Activated naive CD4-positive, alpha-beta T cell treated with anti-CD3 and anti-CD28 coated beads for 36 hours (primary cell): ENCODE measurements at regions of chr14 and their contacts with region 1.

Region 1: GRCh38 chr14:58072288-58073071 is 79.5 kb downstream of the ARMH4 start:
- DNase-seq: peak; percentile 71
- H3K4me3 Mint-ChIP-seq: no peak overlapping the region
- H3K27ac Mint-ChIP-seq: no peak overlapping the region
- H3K4me1 Mint-ChIP-seq: no peaks in the 10 kb centered on the region
- H3K27me3 Mint-ChIP-seq: peaks cover 3% of the 10 kb centered on the region

Region 2: GRCh38 chr14:57486767-57487379 is 585.6 kb before region 1 on chr14:
- CTCF ChIA-PET with region 1: interaction called, 9 read pairs
- intact Hi-C with region 1: loop called (anchors 1 kb)
- DNase-seq: peak; percentile 5
- H3K4me3 Mint-ChIP-seq: no peak overlapping the region
- H3K27ac Mint-ChIP-seq: no peak overlapping the region
- H3K4me1 Mint-ChIP-seq: no peaks in the 10 kb centered on the region
- H3K27me3 Mint-ChIP-seq: peaks cover 4% of the 10 kb centered on the region

Region 3: DNA sequence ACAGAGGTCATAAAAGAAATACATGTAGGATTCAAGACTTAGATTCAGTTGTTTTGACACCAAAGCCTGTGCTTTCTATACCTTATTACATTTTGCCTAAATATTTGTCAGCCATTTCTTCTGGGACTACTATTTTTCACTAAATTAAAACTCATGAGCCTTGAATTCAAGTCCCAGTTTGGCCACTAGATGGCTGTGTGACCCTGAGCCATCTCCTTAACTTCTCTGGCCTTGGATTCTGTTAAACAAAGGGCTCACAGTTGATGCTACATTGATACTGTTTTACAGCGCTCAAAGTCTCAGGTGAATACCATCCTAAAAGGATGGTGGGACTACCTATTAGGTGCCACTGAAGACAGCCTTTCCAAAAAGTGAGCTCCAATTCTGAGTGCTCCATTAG is 539.3 kb before region 1 on chr14:
- CTCF ChIA-PET with region 1: interaction called, 4 read pairs
- intact Hi-C with region 1: loop called (anchors 1 kb)
- DNase-seq: peak; percentile 45
- H3K4me3 Mint-ChIP-seq: no peak overlapping the region
- H3K27ac Mint-ChIP-seq: no peak overlapping the region
- H3K4me1 Mint-ChIP-seq: no peaks in the 10 kb centered on the region
- H3K27me3 Mint-ChIP-seq: peaks cover 4% of the 10 kb centered on the region

Region 4: GRCh38 chr14:57692671-57693070 is 379.8 kb before region 1 on chr14:
- CTCF ChIA-PET with region 1: interaction called, 6 read pairs
- intact Hi-C with region 1: loop called (anchors 2 kb)
- DNase-seq: no peak
- H3K4me3 Mint-ChIP-seq: no peak overlapping the region
- H3K27ac Mint-ChIP-seq: no peak overlapping the region
- H3K4me1 Mint-ChIP-seq: no peaks in the 10 kb centered on the region
- H3K27me3 Mint-ChIP-seq: no peaks in the 10 kb centered on the region

Region 5: GRCh38 chr14:58376791-58377190 is 304.3 kb after region 1 on chr14:
- CTCF ChIA-PET with region 1: no interaction called
- intact Hi-C with region 1: no loop called
- DNase-seq: no peak
- H3K4me3 Mint-ChIP-seq: no peak overlapping the region
- H3K27ac Mint-ChIP-seq: no peak overlapping the region
- H3K4me1 Mint-ChIP-seq: no peaks in the 10 kb centered on the region
- H3K27me3 Mint-ChIP-seq: no peaks in the 10 kb centered on the region

Region 6: DNA sequence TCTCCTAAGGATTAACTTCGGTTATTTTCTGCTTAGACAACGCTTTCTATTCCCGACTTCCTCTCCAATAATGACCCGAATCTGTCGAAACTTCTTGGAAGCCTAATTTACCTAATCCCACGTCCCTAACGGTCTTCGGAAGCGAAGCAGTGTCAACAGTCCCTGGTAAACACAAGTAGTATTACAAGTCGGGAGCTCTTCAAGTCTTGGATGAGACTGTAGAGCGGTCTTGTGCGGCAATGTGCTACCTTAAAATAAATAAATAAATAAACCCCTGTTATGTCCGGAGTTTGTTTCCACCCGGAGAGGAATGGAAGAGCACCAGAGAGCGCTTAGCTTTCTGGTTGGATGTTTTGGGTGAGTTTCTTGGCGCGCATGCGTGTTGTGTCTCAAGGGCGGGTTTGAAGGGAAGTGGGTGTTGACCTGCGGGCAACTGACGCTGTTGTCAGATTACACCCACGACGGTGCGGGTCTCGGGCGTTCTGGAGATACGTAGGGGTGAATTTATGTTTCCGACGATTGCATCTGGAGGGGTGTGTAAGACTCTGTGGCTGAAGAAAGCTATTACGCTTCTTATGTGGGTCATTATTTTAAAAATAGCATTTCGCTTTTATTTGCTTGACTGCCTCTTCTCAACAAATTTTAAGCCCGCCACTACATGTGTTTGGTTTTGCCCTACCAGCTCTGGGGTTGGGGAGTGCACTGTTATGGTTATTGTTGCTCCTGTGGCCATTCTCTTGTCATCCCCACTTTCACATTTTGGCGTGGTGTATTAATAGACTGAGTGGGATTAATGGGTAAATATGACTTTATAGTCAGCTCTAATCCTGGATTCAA is 355.0 kb after region 1 on chr14 and contains the starts of genes KIAA0586 and TIMM9:
- CTCF ChIA-PET with region 1: no interaction called
- intact Hi-C with region 1: no loop called
- DNase-seq: peak; percentile 98
- H3K4me3 Mint-ChIP-seq: peak within 1 kb of the TSS; percentile 88
- H3K27ac Mint-ChIP-seq: peak within 1 kb of the TSS; percentile 99
- H3K4me1 Mint-ChIP-seq: peaks cover 48% of the 10 kb centered on the region
- H3K27me3 Mint-ChIP-seq: no peaks in the 10 kb centered on the region
- total RNA-seq, gene KIAA0586: 40.4 to 41.8 TPM
- total RNA-seq, gene TIMM9: 60.7 to 64.4 TPM

Region 7: DNA sequence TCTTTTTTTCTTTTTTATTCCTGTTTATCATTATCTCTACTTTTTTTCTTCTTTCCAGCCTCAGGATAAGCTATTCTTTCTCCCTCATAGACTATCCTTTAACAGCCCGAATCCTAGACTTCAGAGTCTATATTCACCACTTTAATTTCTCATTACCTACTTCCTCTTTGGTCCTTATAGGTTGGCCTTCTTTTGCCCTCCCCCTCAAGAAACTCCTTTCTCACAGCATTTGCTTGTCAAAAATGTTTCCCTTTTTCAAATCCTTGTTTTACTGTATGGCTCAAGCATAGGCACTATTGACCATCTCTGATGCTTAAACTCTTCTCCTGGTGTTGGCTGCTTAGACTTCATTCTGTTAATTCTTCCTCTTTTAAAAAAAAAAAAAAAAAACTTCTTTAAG is 407.5 kb after region 1 on chr14:
- CTCF ChIA-PET with region 1: no interaction called
- intact Hi-C with region 1: no loop called
- DNase-seq: no peak
- H3K4me3 Mint-ChIP-seq: no peak overlapping the region
- H3K27ac Mint-ChIP-seq: no peak overlapping the region
- H3K4me1 Mint-ChIP-seq: no peaks in the 10 kb centered on the region
- H3K27me3 Mint-ChIP-seq: no peaks in the 10 kb centered on the region